A549 (cell line): ENCODE measurements at regions of chr15 and their contacts with region 1.

Region 1: DNA sequence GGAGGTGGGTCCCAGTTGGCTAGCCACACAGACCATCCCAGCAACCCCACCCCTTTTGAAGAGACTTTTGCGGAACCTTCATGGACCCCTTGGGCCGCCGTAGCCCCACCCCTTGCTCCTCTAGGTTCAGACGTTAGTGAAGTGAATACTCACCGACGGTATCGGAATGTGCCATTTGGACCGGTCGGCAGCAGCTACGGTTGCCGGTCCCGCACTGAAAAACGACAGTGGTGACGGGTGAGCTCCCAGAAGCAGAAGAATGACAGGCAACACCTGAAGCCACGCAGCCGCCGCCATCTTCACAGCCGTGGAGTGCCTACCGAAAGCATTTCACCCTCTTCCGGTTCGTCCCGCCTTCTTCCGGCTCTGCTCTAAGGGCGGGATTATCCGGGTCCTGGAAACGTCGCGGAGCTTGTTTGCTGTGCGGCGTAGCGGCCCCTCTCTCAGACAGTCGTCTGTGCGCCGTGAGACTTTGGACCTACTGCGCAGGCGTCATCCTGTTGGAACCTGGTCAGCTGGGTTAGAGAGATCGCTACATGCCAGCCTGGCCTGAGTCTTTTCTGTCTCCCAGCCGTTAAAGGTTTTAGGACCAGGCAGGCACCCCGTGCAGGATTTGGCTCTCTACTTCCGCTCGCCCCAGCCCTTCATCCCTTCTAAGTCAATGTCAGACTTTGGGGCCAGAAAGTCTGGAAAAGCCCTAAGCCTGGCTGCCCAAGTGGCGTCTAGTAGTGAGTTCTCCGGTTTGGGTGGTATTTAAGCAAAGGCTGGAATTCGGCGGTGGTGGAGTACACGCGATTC is at the starts of genes GANC and TMEM87A:
- DNase-seq: peak; percentile 85 to 97
- ATAC-seq: peak; percentile 96 to 98
- H3K4me3 ChIP-seq: peak within 1 kb of the TSS; percentile 92
- H3K27ac ChIP-seq: peak within 1 kb of the TSS; percentile 96 to 99
- H3K4me1 ChIP-seq: 0 out of 3 replicates have a peak, but pooled peaks cover 13% of the 10 kb centered on the region
- CTCF ChIP-seq: no peak
- EP300 ChIP-seq: no peak
- POLR2A ChIP-seq: peak; percentile 63
- RAD21 ChIP-seq: no peak
- polyA plus RNA-seq, gene GANC: 9.4 and 11.3 TPM in 2 replicates
- polyA plus RNA-seq, gene TMEM87A: 40.6 and 49.8 TPM in 2 replicates

Region 2: GRCh38 chr15:42207674-42208579 is 65.4 kb before region 1 on chr15 and contains the start of gene VPS39:
- CTCF ChIA-PET with region 1: no interaction called
- POLR2A ChIA-PET with region 1: interaction called, 10 read pairs
- DNase-seq: peak; percentile 75 to 80
- ATAC-seq: peak; percentile 100
- H3K4me3 ChIP-seq: peak within 1 kb of the TSS; percentile 91
- H3K27ac ChIP-seq: peak within 1 kb of the TSS; percentile 90 to 96
- H3K4me1 ChIP-seq: peaks cover 6% of the 10 kb centered on the region; the same call in 2 of the 3 replicates
- CTCF ChIP-seq: no peak
- EP300 ChIP-seq: no peak
- POLR2A ChIP-seq: peak; percentile 53
- RAD21 ChIP-seq: no peak
- polyA plus RNA-seq, gene VPS39: 33.3 and 38.1 TPM in 2 replicates

Region 3: GRCh38 chr15:42286445-42287029 is 13.2 kb after region 1 on chr15:
- CTCF ChIA-PET with region 1: no interaction called
- POLR2A ChIA-PET with region 1: interaction called, 11 read pairs
- DNase-seq: no peak
- ATAC-seq: no peak
- H3K4me3 ChIP-seq: no peak overlapping the region
- H3K27ac ChIP-seq: no peak overlapping the region; a peak in 1 of 6 replicates
- H3K4me1 ChIP-seq: peaks cover 15% of the 10 kb centered on the region; the same call in 2 of the 3 replicates
- CTCF ChIP-seq: no peak
- EP300 ChIP-seq: no peak
- POLR2A ChIP-seq: no peak
- RAD21 ChIP-seq: no peak